ENCODE measurements at regions of chr4 and their contacts with region 1.

Region 1: GRCh38 chr4:119212234-119212963 is at the start of gene USP53:
- DNase-seq: peak; percentile 98
- H3K27ac ChIP-seq: peak within 1 kb of the TSS; percentile 99
- CTCF ChIP-seq: no peak

Region 2: GRCh38 chr4:119087121-119087520 is 125.3 kb before region 1 on chr4:
- CTCF ChIA-PET with region 1: interaction called, 10 read pairs
- POLR2A ChIA-PET with region 1: no interaction called
- DNase-seq: no peak
- H3K27ac ChIP-seq: no peak overlapping the region
- CTCF ChIP-seq: peak; percentile 39